Heart left ventricle (tissue), 16 donors: ENCODE measurements at regions of chr11 and their contacts with region 1.

Region 1: GRCh38 chr11:35237860-35238715 is 99.1 kb downstream of the CD44 start:
- DNase-seq: peak in 3 of 5 donors; percentile 30 to 53 (median 47)
- ATAC-seq: peak in 1 of 4 donors; percentile 51
- H3K4me3 ChIP-seq: no peak overlapping the region
- H3K27ac ChIP-seq: no peak overlapping the region
- H3K4me1 ChIP-seq: peaks cover 0 to 47% (median 0%) of the 10 kb centered on the region in 12 donors
- H3K27me3 ChIP-seq: no peaks in the 10 kb centered on the region
- CTCF ChIP-seq: peak; percentile 62 to 84 (median 72)
- POLR2A ChIP-seq: no peak

Region 2: DNA sequence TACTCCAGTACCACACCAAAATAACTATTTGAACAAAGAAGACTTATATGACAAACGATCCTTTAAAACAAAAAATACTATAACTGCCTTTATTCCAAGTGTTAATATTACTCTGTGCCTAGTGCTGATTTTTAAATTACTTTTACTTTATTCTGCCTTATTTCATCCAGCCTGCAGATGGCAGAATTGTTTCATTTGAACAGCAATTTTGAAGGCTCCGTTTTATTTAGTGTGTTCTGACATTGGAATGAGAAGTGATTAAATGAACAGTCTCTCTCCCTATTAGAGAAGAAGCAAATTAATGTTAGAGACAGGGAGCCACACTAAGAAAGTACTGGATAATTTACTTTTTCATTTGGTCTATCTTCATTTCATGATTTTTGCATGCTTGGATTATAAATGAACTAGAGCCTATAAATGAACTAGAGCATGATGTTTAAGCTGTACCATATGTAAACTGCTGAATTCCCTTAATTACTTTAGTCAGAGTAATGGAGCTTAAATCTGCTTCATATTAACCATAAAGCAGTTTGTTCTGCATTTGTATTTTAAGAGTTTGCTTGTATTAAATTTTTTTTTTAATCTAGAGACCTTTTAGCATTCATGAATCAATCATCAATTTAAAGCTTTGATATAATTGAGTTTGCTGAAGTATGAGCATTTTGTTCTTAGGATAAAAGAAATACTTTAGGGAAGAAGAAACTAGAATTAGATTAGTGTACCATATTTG is 311.8 kb before region 1 on chr11:
- intact Hi-C with region 1: loop called (anchors 2 to 10 kb)
- DNase-seq: no peak
- ATAC-seq: peak in 3 of 4 donors; percentile 58 to 78 (median 77)
- H3K4me3 ChIP-seq: no peak overlapping the region
- H3K27ac ChIP-seq: peak overlapping the region in 1 of 12 donors; percentile 34
- H3K4me1 ChIP-seq: peaks cover 0 to 59% (median 27%) of the 10 kb centered on the region in 12 donors
- H3K27me3 ChIP-seq: no peaks in the 10 kb centered on the region
- CTCF ChIP-seq: peak; percentile 58 to 83 (median 70)
- POLR2A ChIP-seq: no peak

Region 3: DNA sequence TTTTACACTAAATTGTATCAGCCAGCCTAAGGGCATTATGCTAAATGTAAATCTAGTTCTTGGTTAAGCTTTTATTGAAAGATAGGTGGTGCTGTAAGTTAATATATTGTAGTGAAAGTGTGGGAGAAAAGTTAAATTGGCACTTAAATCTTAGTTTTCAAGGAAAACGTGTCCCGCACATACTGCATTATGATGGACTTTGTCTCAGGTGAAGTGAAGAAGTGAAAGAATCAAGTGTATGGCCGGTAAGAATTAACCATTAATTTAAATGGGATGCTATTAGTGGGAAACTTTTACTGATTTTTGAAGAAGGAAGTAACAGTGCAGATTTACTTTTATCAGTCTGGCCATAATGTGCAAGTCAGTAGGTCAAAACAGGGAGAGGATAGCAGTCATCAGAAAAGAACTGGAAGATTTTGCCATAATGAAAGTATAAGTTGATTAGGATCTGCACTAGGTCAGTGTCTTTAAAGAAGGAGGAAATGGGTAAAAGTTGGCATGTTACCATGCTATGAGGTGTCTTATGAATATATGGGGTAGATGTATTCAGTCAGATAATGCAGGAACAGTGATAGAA is 240.0 kb before region 1 on chr11:
- intact Hi-C with region 1: loop called in 6 of 10 experiments (anchors 5 to 10 kb)
- DNase-seq: no peak
- ATAC-seq: peak in 1 of 4 donors; percentile 55
- H3K4me3 ChIP-seq: no peak overlapping the region
- H3K27ac ChIP-seq: peak overlapping the region in 1 of 12 donors; percentile 19
- H3K4me1 ChIP-seq: peaks cover 0 to 15% (median 0%) of the 10 kb centered on the region in 12 donors
- H3K27me3 ChIP-seq: no peaks in the 10 kb centered on the region
- CTCF ChIP-seq: peak in 10 of 12 donors; percentile 23 to 68 (median 52)
- POLR2A ChIP-seq: no peak

Region 4: GRCh38 chr11:35006389-35007128 is 231.5 kb before region 1 on chr11:
- intact Hi-C with region 1: loop called in 3 of 10 experiments (anchors 5 kb)
- DNase-seq: no peak
- ATAC-seq: no peak
- H3K4me3 ChIP-seq: no peak overlapping the region
- H3K27ac ChIP-seq: peak overlapping the region in 1 of 12 donors; percentile 29
- H3K4me1 ChIP-seq: peaks cover 0 to 20% (median 0%) of the 10 kb centered on the region in 12 donors
- H3K27me3 ChIP-seq: no peaks in the 10 kb centered on the region
- CTCF ChIP-seq: no peak
- POLR2A ChIP-seq: no peak

Region 5: GRCh38 chr11:35288817-35289541 is 50.9 kb after region 1 on chr11:
- intact Hi-C with region 1: no loop called
- DNase-seq: no peak
- ATAC-seq: peak in 2 of 4 donors; percentile 22 to 28
- H3K4me3 ChIP-seq: no peak overlapping the region
- H3K27ac ChIP-seq: peak overlapping the region in 4 of 12 donors; percentile 5 to 54 (median 39)
- H3K4me1 ChIP-seq: peaks cover 0 to 25% (median 1%) of the 10 kb centered on the region in 12 donors
- H3K27me3 ChIP-seq: no peaks in the 10 kb centered on the region
- CTCF ChIP-seq: no peak
- POLR2A ChIP-seq: no peak